HepG2 (cell line): ENCODE measurements at regions of chr11 and their contacts with region 1.

Region 1: GRCh38 chr11:10366568-10367370 is 61.9 kb downstream of the ADM start:
- DNase-seq: peak; percentile 67
- ATAC-seq: peak; percentile 94
- H3K4me3 ChIP-seq: peak overlapping the region in 2 of 3 experiments; percentile 21 to 45; a peak in 2 of 6 replicates
- H3K27ac ChIP-seq: no peak overlapping the region
- H3K4me1 ChIP-seq: peaks cover 15% of the 10 kb centered on the region
- H3K27me3 ChIP-seq: no peaks in the 10 kb centered on the region
- CTCF ChIP-seq: peak; percentile 97
- EP300 ChIP-seq: no peak
- POLR2A ChIP-seq: no peak
- RAD21 ChIP-seq: peak; percentile 87

Region 2: GRCh38 chr11:10181811-10182210 is 185.0 kb before region 1 on chr11:
- CTCF ChIA-PET with region 1: no interaction called
- POLR2A ChIA-PET with region 1: no interaction called
- in situ Hi-C with region 1: no loop called
- intact Hi-C with region 1: loop called (anchors 5 kb)
- DNase-seq: peak; percentile 32
- ATAC-seq: no peak
- H3K4me3 ChIP-seq: no peak overlapping the region
- H3K27ac ChIP-seq: no peak overlapping the region
- H3K4me1 ChIP-seq: no peaks in the 10 kb centered on the region
- H3K27me3 ChIP-seq: no peaks in the 10 kb centered on the region
- CTCF ChIP-seq: no peak
- EP300 ChIP-seq: no peak
- POLR2A ChIP-seq: no peak
- RAD21 ChIP-seq: no peak

Region 3: DNA sequence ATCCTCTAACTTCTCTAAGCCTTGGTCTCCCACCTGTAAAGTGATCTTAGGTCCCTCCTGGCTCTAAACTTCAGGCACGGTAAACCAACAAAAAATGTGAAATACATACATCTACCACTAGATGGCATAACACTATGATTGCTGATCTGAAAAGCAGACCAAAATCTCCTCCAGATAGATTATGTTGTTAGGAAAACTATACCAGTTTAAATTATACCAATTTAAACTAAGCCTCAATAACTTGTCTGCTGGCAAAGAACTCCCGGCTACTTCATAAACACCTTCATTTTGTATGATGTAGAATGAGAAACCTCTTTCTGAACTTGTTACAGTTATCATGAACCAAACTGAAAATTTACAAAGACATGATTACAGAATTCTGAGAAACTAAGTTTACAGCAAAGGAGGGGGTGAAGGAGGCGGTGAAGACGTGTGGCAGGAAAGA is 158.6 kb before region 1 on chr11:
- CTCF ChIA-PET with region 1: interaction called, 5 read pairs
- POLR2A ChIA-PET with region 1: no interaction called
- in situ Hi-C with region 1: no loop called
- intact Hi-C with region 1: loop called (anchors 2 kb)
- DNase-seq: peak; percentile 41
- ATAC-seq: peak; percentile 56
- H3K4me3 ChIP-seq: no peak overlapping the region
- H3K27ac ChIP-seq: no peak overlapping the region
- H3K4me1 ChIP-seq: peaks cover 31% of the 10 kb centered on the region
- H3K27me3 ChIP-seq: no peaks in the 10 kb centered on the region
- CTCF ChIP-seq: peak; percentile 73
- EP300 ChIP-seq: no peak
- POLR2A ChIP-seq: no peak
- RAD21 ChIP-seq: no peak

Region 4: GRCh38 chr11:10295064-10295901 is 71.5 kb before region 1 on chr11:
- CTCF ChIA-PET with region 1: no interaction called
- POLR2A ChIA-PET with region 1: no interaction called
- in situ Hi-C with region 1: no loop called
- intact Hi-C with region 1: no loop called
- DNase-seq: no peak
- ATAC-seq: no peak
- H3K4me3 ChIP-seq: peak overlapping the region; percentile 89 to 96 (median 90)
- H3K27ac ChIP-seq: peak overlapping the region; percentile 88
- H3K4me1 ChIP-seq: peaks cover 44% of the 10 kb centered on the region
- H3K27me3 ChIP-seq: no peaks in the 10 kb centered on the region; a peak in 1 of 5 replicates
- CTCF ChIP-seq: no peak
- EP300 ChIP-seq: no peak
- POLR2A ChIP-seq: no peak
- RAD21 ChIP-seq: no peak

Region 5: DNA sequence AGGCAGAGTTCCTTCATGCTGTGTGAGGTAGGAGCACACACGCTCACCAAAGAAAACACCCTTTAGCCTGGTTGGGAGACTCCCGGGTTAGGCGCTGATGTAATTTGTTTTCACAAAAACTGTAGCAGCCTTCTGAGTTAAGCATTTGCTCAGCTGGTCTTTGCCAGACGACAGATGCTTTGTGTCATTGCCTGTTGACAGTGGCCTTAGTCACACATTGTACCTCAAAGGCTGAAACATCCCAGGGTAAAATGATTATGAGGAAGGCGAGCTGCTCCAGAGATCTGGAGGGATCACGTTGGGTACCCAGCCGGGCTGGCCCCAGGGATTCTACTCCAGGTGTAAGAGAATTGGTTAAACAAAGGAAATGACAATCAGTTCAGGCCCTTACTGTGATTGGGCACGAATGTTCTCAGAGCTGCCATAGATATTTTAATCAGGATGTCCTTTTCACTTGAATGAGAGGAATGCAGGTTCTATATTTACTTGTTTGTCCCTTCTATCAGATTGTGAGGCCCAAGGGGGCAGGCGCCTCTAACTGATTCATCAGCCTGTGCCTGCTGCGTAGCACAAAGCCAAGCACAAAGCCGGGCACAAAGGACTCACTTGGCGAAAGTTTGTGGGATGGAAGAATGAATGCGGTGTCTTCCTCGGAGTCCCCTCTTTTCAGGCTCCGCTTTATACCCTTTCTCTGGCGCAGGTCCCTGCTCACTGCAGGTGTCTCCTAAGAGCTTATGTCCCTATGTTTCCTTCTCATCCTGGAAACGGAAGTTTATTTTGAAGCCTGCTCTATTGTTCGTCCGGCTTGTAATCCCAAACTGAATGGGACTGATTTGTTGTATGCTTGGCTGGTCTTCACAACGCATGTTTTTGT is 14.8 kb before region 1 on chr11:
- CTCF ChIA-PET with region 1: no interaction called
- POLR2A ChIA-PET with region 1: interaction called, 14 read pairs
- in situ Hi-C with region 1: no loop called
- intact Hi-C with region 1: no loop called
- DNase-seq: peak; percentile 89
- ATAC-seq: peak; percentile 93
- H3K4me3 ChIP-seq: peak overlapping the region; percentile 51 to 62 (median 52); a peak in 5 of 6 replicates
- H3K27ac ChIP-seq: peak overlapping the region; percentile 59
- H3K4me1 ChIP-seq: peaks cover 48% of the 10 kb centered on the region
- H3K27me3 ChIP-seq: no peaks in the 10 kb centered on the region
- CTCF ChIP-seq: no peak
- EP300 ChIP-seq: 0 out of 4 replicates have a peak, but pooled peaks of 1 of the 2 experiments have one; percentile 4
- POLR2A ChIP-seq: no peak
- RAD21 ChIP-seq: no peak